Activated B cell treated with CpG ODN at 0.5 μM for 24 hours (primary cell): ENCODE measurements at regions of chr16 and their contacts with region 1.

Region 1: GRCh38 chr16:24883714-24884151 is 38.0 kb downstream of the SLC5A11 start:
- DNase-seq: no peak
- ATAC-seq: no peak
- H3K4me3 Mint-ChIP-seq: no peak overlapping the region
- H3K27ac Mint-ChIP-seq: no peak overlapping the region
- H3K4me1 Mint-ChIP-seq: no peaks in the 10 kb centered on the region
- H3K27me3 Mint-ChIP-seq: peaks cover 5% of the 10 kb centered on the region
- CTCF ChIP-seq: no peak

Region 2: GRCh38 chr16:24771132-24771778 is 112.5 kb before region 1 on chr16:
- CTCF ChIA-PET with region 1: no interaction called
- POLR2A ChIA-PET with region 1: no interaction called
- intact Hi-C with region 1: no loop called
- DNase-seq: no peak
- ATAC-seq: no peak
- H3K4me3 Mint-ChIP-seq: no peak overlapping the region
- H3K27ac Mint-ChIP-seq: no peak overlapping the region
- H3K4me1 Mint-ChIP-seq: peaks cover 16% of the 10 kb centered on the region
- H3K27me3 Mint-ChIP-seq: no peaks in the 10 kb centered on the region
- CTCF ChIP-seq: no peak

Region 3: GRCh38 chr16:24789881-24790280 is 93.9 kb before region 1 on chr16:
- CTCF ChIA-PET with region 1: no interaction called
- POLR2A ChIA-PET with region 1: interaction called, 10 read pairs
- intact Hi-C with region 1: no loop called
- DNase-seq: no peak
- ATAC-seq: no peak
- H3K4me3 Mint-ChIP-seq: no peak overlapping the region
- H3K27ac Mint-ChIP-seq: no peak overlapping the region
- H3K4me1 Mint-ChIP-seq: no peaks in the 10 kb centered on the region
- H3K27me3 Mint-ChIP-seq: no peaks in the 10 kb centered on the region
- CTCF ChIP-seq: no peak

Region 4: DNA sequence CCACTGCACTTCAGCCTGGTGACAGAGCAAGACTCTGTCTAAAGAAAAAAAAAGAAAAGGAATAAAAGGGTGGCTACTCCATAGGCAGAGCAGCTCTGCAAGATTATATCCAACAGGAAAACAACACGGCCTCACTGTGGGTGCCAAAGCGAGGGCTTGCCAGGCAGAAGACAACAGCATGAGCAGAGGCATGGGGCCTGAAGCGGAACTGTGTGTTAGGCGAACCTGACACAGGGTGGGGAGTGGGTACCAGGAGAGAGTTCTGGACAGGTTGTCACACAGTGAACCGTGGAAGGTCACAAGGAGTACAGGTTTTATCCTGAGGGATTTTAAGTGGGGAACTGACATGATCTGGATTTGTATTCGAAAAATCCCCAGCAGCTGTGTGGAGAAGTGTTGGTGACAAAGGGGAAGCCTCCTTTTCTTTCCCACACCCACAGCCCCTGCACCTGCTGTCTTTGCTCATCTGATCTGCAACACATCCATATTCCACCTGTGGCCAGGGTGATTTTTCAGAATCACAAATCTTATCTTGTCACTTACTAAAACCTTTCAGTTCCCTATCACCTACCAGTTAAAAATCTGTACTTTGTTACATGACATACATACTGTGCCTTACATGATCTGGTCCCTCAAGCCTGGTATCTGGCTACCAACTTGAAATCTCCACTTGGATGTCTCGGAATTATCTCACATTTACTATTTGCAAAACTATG is 154.7 kb after region 1 on chr16:
- CTCF ChIA-PET with region 1: no interaction called
- POLR2A ChIA-PET with region 1: no interaction called
- intact Hi-C with region 1: no loop called
- DNase-seq: no peak
- ATAC-seq: peak; percentile 51
- H3K4me3 Mint-ChIP-seq: no peak overlapping the region
- H3K27ac Mint-ChIP-seq: peak overlapping the region; percentile 74
- H3K4me1 Mint-ChIP-seq: peaks cover 54% of the 10 kb centered on the region
- H3K27me3 Mint-ChIP-seq: no peaks in the 10 kb centered on the region
- CTCF ChIP-seq: no peak